BJ (cell line): ENCODE measurements at regions of chr19 and their contacts with region 1.

Region 1: GRCh38 chr19:5001615-5002014 is 32.7 kb downstream of the KDM4B start:
- DNase-seq: peak; percentile 34
- H3K4me3 ChIP-seq: no peak overlapping the region
- H3K27me3 ChIP-seq: no peaks in the 10 kb centered on the region
- CTCF ChIP-seq: peak; percentile 86

Region 2: GRCh38 chr19:4831304-4831978 is 170.2 kb before region 1 on chr19 and contains the start of gene TICAM1:
- CTCF ChIA-PET with region 1: no interaction called
- POLR2A ChIA-PET with region 1: no interaction called
- DNase-seq: no peak
- H3K4me3 ChIP-seq: peak within 1 kb of the TSS; percentile 100
- H3K27me3 ChIP-seq: no peaks in the 10 kb centered on the region
- CTCF ChIP-seq: no peak
- polyA plus RNA-seq, gene TICAM1: 1.7 and 1.9 TPM in 2 replicates

Region 3: DNA sequence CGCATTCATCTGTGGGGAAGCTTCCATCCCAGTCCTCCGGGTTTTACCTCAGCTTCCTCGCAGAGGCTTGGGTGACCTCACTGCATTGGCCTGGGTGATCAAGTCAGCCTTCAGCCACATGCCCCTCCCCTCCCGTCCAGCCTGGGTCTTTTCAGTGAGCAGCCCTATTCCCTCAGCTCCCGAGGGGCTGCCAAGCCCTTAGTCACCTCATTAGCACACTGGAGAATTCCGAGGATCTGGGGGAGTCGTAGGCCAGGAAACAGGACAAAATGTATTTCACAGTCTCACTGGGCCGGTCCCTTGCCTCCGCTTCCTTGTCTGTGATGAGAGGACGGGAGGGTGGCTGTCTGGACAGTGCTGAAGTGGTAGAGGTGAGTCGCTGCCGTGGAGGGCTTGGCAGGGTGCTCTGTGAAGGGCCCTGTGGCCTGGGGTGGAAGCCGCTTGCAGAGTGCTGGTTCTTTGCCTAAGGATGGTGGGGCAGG is 12.8 kb before region 1 on chr19:
- CTCF ChIA-PET with region 1: interaction called, 10 read pairs
- POLR2A ChIA-PET with region 1: no interaction called
- DNase-seq: peak; percentile 53
- H3K4me3 ChIP-seq: no peak overlapping the region
- H3K27me3 ChIP-seq: no peaks in the 10 kb centered on the region
- CTCF ChIP-seq: no peak

Region 4: DNA sequence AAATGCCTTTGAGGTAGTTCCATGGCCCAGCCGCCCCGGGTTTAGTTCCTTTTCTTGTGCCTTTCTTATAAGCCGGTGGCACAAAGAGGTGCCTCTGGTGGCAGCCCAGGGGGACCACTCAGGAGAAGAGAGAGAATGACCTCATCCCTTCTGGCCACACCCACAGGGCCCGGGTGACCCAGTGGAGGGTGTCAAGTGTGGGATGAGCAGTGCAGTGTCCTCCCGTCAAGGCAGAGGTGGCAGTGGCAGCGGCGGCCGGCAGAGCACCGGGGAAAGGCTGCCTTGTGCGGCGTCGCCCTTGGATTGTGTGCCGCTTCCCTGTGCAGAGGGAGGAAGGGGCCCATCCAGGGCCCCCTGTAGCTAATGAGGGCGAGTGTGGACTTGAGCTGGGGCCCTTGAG is 15.2 kb after region 1 on chr19:
- CTCF ChIA-PET with region 1: interaction called, 11 read pairs
- POLR2A ChIA-PET with region 1: no interaction called
- DNase-seq: no peak
- H3K4me3 ChIP-seq: no peak overlapping the region
- H3K27me3 ChIP-seq: no peaks in the 10 kb centered on the region
- CTCF ChIP-seq: no peak